Cardiac septum (tissue), 1 donor: ENCODE measurements at regions of chr13 and their contacts with region 1.

Region 1: DNA sequence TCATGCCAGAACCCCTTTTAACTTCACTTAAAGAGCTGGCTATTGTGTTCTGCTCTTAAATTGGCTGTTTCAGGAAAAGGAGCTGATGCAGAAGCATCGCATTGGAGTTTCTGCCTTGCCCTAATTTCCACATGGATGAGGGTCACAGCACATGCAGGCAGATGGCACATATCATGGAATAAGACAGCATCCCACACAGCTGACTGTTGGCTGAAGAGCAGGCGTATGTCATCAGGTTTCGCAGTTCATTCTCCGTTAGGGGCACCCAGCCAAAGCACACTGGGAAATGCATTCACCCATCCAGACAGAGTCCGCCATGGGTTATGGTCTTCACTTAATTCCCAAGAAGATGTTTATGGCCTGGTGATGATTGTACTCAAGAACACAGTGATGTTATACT is 572.5 kb downstream of the LIG4 start:
- DNase-seq: no peak

Region 2: GRCh38 chr13:107361666-107362065 is 281.2 kb before region 1 on chr13:
- intact Hi-C with region 1: no loop called
- DNase-seq: no peak

Region 3: DNA sequence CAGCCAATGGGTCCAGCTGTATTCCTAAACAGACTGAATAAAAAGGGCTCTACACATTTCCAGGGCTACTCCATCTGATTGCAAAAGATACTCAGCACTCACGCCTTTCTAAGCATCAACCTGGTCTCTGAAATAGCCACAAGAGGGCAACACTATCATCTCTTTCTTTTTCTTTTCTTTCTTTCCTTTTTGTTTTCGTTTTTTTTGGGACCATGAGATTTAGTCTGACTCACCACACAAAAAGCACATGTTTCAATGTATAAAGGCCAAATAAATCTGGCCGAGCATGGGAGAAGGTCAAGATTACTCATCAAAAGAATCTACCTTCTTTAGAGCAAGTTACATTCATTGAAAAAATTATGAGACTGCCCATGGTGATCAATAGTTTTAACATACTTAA is 269.3 kb before region 1 on chr13:
- intact Hi-C with region 1: loop called (anchors 10 kb)
- DNase-seq: no peak

Region 4: GRCh38 chr13:107721125-107721869 is 78.5 kb after region 1 on chr13:
- intact Hi-C with region 1: no loop called
- DNase-seq: no peak

Region 5: DNA sequence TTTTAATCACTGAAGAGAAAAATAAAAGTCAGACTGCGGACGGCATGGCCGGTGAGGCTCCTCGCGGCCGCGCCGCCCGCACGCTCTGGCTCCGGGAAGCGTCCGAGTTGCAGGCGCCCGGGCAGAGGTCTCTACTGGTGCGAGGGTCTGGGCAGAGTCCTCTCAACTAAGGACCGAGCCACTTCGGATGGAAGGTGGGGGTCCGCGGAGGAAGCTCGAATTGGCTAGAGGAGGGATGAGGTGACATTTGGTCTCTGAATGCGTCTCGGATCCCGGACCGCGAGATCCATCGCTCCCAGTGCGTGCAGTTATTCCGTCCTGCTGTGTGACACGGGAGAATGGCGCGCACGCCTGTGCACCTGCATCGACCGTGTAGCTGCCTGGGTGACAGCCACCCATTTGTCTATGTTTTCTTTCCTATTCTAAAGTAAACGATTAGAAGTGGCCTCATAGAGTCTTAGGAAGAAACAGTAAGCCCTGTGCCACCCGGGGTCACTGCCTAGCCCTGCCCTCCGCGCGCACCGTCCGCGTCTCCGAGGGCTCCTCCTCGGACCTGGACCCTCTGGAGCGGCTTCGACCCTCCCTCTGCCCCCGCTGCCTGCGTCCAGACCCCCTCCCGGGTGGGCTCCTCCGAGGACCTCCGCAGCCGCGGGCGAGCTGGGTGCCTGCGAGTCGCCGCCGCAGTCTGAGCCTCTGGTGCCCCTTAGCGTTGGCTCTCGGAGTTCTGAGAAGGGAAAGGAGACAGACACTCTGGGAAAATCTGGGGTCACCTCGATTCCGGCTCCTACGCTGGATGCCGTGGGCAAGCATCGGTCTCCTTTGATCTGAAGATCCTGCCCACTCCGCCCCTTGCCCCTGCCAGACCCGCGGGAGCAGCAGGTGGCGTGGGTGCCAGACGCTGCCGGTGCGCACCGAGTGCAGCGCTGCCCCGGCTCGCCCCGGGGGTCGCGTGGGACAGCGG is 225.2 kb after region 1 on chr13:
- intact Hi-C with region 1: loop called (anchors 10 kb)
- DNase-seq: no peak